Activated CD4-positive, alpha-beta T cell treated with anti-CD3 and anti-CD28 coated beads, Interleukin-2, amount 10 ng/mL, durations not matched to agents 24 days and 14 days (primary cell): ENCODE measurements at regions of chr19 and their contacts with region 1.

Region 1: DNA sequence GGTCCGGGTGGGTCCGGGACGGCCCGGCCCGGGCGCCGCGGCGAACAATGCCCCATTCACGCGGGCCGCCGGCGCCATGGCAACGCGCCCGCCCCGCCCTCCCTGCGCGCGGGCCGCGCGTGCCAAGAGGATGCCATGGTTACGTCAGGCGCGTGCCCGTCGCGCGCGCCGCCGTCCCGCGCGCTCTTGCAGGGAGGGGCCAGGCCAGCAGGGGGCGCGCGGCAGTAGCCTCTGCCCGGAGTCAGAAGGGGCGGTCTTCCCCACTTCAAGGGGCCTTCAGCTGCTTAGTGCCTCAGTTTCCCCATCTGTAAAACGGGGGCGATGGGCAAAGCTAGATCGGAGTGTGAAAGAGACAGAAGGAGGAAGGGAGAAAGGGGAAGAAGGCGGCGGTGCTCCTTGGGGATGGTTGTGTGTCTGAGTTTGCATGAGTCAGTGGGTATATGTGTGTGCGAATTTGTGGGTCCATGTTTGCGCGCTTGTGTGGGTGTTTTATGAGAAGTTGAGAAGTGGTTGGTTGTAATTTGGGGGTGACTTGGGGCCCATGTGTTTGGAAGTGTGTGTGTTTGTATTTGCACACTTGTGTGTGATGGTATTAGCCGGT is 11.6 kb upstream of the NFIX start:
- DNase-seq: peak; percentile 96
- H3K4me3 Mint-ChIP-seq: no peak overlapping the region
- H3K27ac Mint-ChIP-seq: no peak overlapping the region
- H3K4me1 Mint-ChIP-seq: no peaks in the 10 kb centered on the region
- H3K27me3 Mint-ChIP-seq: peaks cover 11% of the 10 kb centered on the region

Region 2: DNA sequence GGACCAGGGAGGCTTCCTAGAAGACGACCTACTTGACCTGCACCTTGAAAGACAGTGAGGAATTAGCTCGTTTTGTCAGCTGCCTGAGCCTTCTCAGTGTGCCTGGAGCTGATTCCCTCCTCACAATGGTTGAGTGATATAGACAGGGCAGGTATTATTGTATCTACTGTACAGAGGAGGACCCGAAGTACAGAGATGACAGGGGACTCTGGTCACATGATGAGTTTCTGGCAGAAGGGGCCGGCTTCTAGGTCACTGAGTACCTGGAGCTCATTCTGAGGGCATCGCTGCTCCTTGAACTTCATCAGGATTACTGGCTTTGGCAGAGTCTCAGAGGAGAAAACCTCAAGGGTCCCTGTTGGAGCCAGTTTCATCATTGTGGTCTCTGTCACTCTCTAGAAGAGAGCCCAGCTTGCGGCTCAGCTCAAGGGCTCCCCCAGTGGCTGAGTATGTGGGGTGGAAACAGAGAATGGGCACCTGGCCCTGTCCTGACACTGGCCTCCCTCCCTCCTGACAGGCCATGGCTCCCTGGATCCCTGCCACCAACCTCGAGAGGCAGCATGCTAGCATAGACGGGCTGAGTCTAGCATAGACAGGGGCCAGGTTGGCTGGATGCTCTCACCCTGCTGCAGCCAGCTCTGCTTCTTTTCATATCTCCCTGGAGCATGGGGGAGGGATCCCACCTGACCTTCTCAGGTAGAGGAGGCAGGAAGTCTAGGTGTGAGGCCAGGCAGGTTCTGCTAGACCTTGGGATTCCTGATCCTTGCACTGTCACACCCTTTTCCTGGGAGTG is 50.4 kb after region 1 on chr19:
- intact Hi-C with region 1: loop called (anchors 5 kb)
- DNase-seq: peak; percentile 81
- H3K4me3 Mint-ChIP-seq: no peak overlapping the region
- H3K27ac Mint-ChIP-seq: no peak overlapping the region
- H3K4me1 Mint-ChIP-seq: peaks cover 3% of the 10 kb centered on the region
- H3K27me3 Mint-ChIP-seq: peaks cover 2% of the 10 kb centered on the region

Region 3: DNA sequence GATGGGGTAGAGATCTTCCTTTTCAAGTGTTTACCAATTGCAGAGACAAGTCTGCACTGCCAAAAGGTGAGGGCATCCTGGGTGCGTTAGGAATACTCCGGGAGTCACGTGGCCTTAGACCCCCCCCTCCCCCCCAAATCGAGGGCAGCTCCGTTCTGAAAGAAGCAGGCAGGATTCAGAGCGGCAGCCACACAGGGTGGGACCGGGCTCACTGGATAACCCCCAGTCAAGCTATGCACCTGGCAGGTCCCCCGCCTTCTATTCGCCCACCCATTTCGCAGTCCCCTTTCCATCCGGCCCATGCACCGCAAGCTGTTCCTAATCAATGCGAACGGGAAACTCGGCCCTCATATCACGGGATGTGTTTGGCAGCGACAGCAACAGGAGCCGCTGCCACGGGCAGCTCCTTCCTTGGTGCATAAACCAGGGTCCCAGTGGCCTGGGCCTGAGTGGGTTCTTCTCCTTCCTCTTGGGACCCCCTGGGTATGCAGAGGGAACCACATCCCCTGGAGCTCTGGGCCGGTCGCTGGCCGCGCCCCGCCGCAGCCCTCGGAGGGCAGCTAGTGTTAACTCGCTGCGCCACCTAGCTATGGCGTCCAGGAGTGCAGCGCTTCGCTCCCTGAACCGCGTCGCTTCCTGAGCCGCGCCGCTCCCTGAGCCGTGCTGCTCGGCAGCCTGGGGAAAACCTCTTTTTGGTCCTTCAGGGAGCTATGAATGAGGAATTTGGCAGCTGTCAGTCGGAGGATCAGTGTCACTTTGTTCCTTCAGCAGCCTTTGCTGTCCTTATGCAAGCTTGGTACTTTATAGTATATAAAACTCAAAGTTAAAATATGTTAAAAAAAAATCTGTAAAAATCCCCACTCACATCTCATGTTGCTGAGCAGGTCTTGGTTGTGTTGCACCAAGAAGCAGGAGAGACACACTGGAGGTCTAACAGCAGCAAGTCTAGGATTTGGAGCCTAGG is 77.6 kb after region 1 on chr19:
- intact Hi-C with region 1: loop called (anchors 1 kb)
- DNase-seq: peak; percentile 94
- H3K4me3 Mint-ChIP-seq: peak overlapping the region; percentile 80
- H3K27ac Mint-ChIP-seq: no peak overlapping the region
- H3K4me1 Mint-ChIP-seq: peaks cover 5% of the 10 kb centered on the region
- H3K27me3 Mint-ChIP-seq: peaks cover 28% of the 10 kb centered on the region

Region 4: GRCh38 chr19:13093407-13094105 is 109.9 kb after region 1 on chr19:
- intact Hi-C with region 1: loop called (anchors 1 kb)
- DNase-seq: peak; percentile 94
- H3K4me3 Mint-ChIP-seq: no peak overlapping the region
- H3K27ac Mint-ChIP-seq: no peak overlapping the region
- H3K4me1 Mint-ChIP-seq: peaks cover 23% of the 10 kb centered on the region
- H3K27me3 Mint-ChIP-seq: peaks cover 25% of the 10 kb centered on the region

Region 5: GRCh38 chr19:13262450-13262849 is 278.8 kb after region 1 on chr19:
- intact Hi-C with region 1: loop called (anchors 10 kb)
- DNase-seq: peak; percentile 74
- H3K4me3 Mint-ChIP-seq: no peak overlapping the region
- H3K27ac Mint-ChIP-seq: no peak overlapping the region
- H3K4me1 Mint-ChIP-seq: peaks cover 17% of the 10 kb centered on the region
- H3K27me3 Mint-ChIP-seq: peaks cover 22% of the 10 kb centered on the region